ENCODE measurements at regions of chr15 and their contacts with region 1.

Region 1: DNA sequence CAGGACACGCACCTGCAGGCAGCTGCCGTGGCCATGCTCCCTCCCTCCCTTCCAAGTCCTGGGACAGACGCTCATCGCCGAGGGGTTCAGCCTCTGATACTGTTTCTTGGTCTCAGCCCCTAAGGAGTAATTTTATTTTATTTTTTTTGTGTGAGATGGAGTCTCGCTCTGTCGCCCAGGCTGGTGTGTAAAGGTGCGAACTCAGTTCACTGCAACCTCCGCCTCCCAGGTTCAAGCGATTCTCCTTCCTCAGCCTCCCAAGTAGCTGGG is 53.7 kb downstream of the ADAMTS7 start:
- DNase-seq: no peak
- H3K4me3 ChIP-seq: no peak overlapping the region
- H3K27ac ChIP-seq: peak overlapping the region; percentile 78 to 81
- H3K4me1 ChIP-seq: peaks cover 17 to 31% of the 10 kb centered on the region in 2 donors
- H3K27me3 ChIP-seq: no peaks in the 10 kb centered on the region
- CTCF ChIP-seq: no peak

Region 2: DNA sequence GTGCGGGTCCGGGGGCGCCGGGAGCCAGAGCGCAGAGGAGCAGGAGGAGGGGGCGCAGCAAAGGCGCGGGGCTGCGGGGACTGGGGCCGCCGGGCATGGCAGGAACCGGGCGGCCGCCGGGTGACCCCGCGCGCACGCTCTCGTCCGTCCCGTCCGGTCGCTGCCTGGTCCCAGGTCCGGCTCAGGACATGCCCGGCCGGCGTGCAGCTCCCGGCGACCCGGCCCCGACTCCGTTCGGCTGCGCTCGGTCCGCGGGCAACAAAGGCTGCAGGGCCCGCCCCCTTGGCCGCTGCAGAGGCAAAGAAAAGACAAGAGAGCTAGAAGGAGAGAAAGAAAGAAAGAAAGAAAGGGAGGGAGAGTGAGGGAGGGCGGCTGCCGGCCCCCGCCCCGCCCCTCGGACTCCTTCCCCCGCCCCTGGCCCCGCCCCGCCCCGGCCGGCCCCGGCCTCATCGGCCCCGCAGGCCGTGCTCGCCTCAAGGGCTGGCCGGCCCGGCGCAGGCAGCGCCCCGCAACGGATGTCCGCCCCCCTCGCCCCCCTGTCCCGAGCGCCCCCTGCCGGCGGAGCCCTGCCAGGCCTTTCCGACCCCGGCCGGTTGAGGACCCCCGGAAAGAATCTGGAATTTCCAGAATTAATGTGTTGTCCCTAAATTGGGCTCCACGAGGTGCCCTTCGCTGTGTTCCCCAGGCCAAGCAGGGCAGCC is 53.7 kb after region 1 on chr15 and contains the start of gene ADAMTS7:
- intact Hi-C with region 1: loop called (anchors 5 kb)
- DNase-seq: peak in 1 of 2 donors; percentile 86
- H3K4me3 ChIP-seq: peak within 1 kb of the TSS; percentile 80 to 81
- H3K27ac ChIP-seq: peak within 1 kb of the TSS; percentile 87 to 93
- H3K4me1 ChIP-seq: peaks cover 6 to 7% of the 10 kb centered on the region in 2 donors
- H3K27me3 ChIP-seq: no peaks in the 10 kb centered on the region
- CTCF ChIP-seq: peak; percentile 70 to 77 (median 77)
- total RNA-seq, gene ADAMTS7: 33.3 TPM

Region 3: DNA sequence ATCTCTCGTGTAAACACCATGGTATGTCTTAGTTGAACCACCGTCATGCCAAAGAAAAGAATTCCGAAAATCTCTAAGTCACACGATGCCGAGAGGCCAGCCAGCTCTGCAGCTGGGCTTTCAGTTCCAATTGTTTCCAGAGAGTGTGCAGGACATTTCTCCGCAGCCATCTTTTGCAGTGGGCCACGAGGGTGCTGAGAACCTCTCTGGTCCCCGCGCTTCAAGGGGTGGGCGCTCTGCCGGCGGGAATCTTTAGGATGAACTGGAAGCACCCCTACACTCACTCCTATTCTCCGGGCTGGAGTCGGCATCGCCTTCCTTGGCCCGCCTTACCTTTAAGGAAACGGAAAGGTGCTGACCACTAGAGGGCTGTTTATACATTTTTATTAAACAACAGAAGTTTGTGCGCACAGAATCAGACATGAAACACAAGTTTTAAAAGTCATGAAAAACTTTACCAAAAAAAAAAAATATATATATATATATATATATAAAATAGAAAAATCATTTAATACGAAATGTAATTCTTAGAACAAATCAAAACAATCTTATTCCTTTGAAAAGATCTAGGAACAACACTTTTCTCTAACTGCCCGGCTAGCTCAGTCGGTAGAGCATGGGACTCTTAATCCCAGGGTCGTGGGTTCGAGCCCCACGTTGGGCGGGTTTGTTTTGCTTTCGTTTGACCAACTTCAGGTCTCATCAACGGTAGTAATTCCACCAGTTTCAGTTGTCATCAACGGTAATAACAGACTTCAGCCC is 102.6 kb after region 1 on chr15:
- intact Hi-C with region 1: loop called (anchors 5 kb)
- DNase-seq: peak in 1 of 2 donors; percentile 87
- H3K4me3 ChIP-seq: peak overlapping the region; percentile 50 to 65
- H3K27ac ChIP-seq: peak overlapping the region; percentile 83
- H3K4me1 ChIP-seq: peaks cover 6 to 12% of the 10 kb centered on the region in 2 donors
- H3K27me3 ChIP-seq: no peaks in the 10 kb centered on the region
- CTCF ChIP-seq: peak; percentile 48 to 61 (median 52)

Region 4: GRCh38 chr15:78872972-78873792 is 115.6 kb after region 1 on chr15:
- intact Hi-C with region 1: loop called (anchors 2 kb)
- DNase-seq: peak in 1 of 2 donors; percentile 89
- H3K4me3 ChIP-seq: peak overlapping the region; percentile 98 to 99
- H3K27ac ChIP-seq: peak overlapping the region; percentile 100
- H3K4me1 ChIP-seq: peaks cover 5 to 16% of the 10 kb centered on the region in 2 donors
- H3K27me3 ChIP-seq: no peaks in the 10 kb centered on the region
- CTCF ChIP-seq: no peak

Measured in ascending aorta (tissue), 2 donors.